HEK293 (cell line): ENCODE measurements at regions of chr12 and their contacts with region 1.

Region 1: GRCh38 chr12:751192-751998 is 984 bp upstream of the WNK1 start:
- H3K4me3 ChIP-seq: peak overlapping the region; percentile 44
- H3K27ac ChIP-seq: peak overlapping the region; percentile 77
- H3K4me1 ChIP-seq: no peaks in the 10 kb centered on the region; the same call in 1 of the 2 replicates
- CTCF ChIP-seq: peak; percentile 96

Region 2: GRCh38 chr12:401235-402028 is 350.0 kb before region 1 on chr12 and contains the start of gene CCDC77:
- CTCF ChIA-PET with region 1: no interaction called
- POLR2A ChIA-PET with region 1: no interaction called
- H3K4me3 ChIP-seq: peak within 1 kb of the TSS; percentile 59
- H3K27ac ChIP-seq: peak within 1 kb of the TSS; percentile 28
- H3K4me1 ChIP-seq: no peaks in the 10 kb centered on the region; the same call in 1 of the 2 replicates
- CTCF ChIP-seq: peak; percentile 89

Region 3: GRCh38 chr12:575948-576612 is 175.3 kb before region 1 on chr12:
- CTCF ChIA-PET with region 1: interaction called, 46 read pairs
- POLR2A ChIA-PET with region 1: interaction called, 26 read pairs
- H3K4me3 ChIP-seq: no peak overlapping the region
- H3K27ac ChIP-seq: peak overlapping the region; percentile 65
- H3K4me1 ChIP-seq: peaks cover 9% of the 10 kb centered on the region
- CTCF ChIP-seq: peak; percentile 96

Region 4: GRCh38 chr12:724194-724855 is 27.1 kb before region 1 on chr12:
- CTCF ChIA-PET with region 1: interaction called, 12 read pairs
- POLR2A ChIA-PET with region 1: interaction called, 3 read pairs
- H3K4me3 ChIP-seq: no peak overlapping the region
- H3K27ac ChIP-seq: no peak overlapping the region
- H3K4me1 ChIP-seq: no peaks in the 10 kb centered on the region
- CTCF ChIP-seq: no peak

Region 5: GRCh38 chr12:818733-819132 is 67.3 kb after region 1 on chr12:
- CTCF ChIA-PET with region 1: interaction called, 65 read pairs
- POLR2A ChIA-PET with region 1: interaction called, 7 read pairs
- H3K4me3 ChIP-seq: no peak overlapping the region
- H3K27ac ChIP-seq: no peak overlapping the region
- H3K4me1 ChIP-seq: no peaks in the 10 kb centered on the region
- CTCF ChIP-seq: no peak

Region 6: GRCh38 chr12:1217191-1217949 is 466.0 kb after region 1 on chr12:
- CTCF ChIA-PET with region 1: no interaction called
- POLR2A ChIA-PET with region 1: no interaction called
- H3K4me3 ChIP-seq: no peak overlapping the region; the same call in 1 of the 2 replicates
- H3K27ac ChIP-seq: peak overlapping the region; percentile 62
- H3K4me1 ChIP-seq: peaks cover 36% of the 10 kb centered on the region
- CTCF ChIP-seq: no peak